ENCODE measurements at regions of chr11 and their contacts with region 1.

Region 1: GRCh38 chr11:16935518-16936302 is 78.5 kb downstream of the PLEKHA7 start:
- DNase-seq: peak in 2 of 9 donors; percentile 3 to 6
- ATAC-seq: no peak
- H3K4me3 ChIP-seq: no peak overlapping the region
- H3K4me3 Mint-ChIP-seq: no peak overlapping the region
- H3K27ac ChIP-seq: no peak overlapping the region
- H3K27ac Mint-ChIP-seq: no peak overlapping the region
- H3K4me1 ChIP-seq: no peaks in the 10 kb centered on the region
- H3K4me1 Mint-ChIP-seq: no peaks in the 10 kb centered on the region
- H3K27me3 ChIP-seq: no peaks in the 10 kb centered on the region
- H3K27me3 Mint-ChIP-seq: peaks cover 0 to 20% (median 5%) of the 10 kb centered on the region in 5 donors

Region 2: DNA sequence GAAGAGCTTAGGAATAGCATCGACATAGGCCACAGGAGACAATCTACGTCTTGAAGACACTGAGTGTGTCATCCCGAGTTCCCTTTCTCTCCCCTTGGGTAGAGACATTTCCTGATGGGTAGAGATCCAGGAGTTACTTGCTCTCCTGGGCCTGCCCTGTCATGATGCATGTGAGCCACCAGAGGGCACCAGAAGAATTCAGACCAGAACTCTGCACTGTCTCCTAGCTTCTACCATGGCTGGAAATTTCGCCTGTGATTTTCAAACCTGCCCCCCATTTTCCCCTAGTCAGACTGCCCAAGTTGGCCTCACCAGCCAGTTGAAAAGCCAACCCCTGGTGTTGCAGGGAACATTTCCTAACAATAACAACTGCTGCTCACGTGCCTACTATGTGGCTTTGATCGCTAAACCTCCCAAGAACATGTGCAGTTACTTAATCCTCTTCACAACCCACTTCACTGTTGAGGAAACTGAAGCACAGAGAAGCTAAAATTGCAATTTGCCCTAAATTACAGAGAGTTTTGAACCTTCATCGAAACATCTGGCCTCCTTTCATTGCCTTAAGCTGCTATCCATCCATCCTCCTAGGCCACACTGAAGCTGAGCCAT is 150.1 kb before region 1 on chr11:
- CTCF ChIA-PET with region 1: no interaction called
- POLR2A ChIA-PET with region 1: no interaction called
- intact Hi-C with region 1: loop called in 1 of 2 experiments (anchors 10 kb)
- DNase-seq: peak in 6 of 9 donors; percentile 24 to 50 (median 40)
- ATAC-seq: peak; percentile 83
- H3K4me3 ChIP-seq: no peak overlapping the region
- H3K4me3 Mint-ChIP-seq: no peak overlapping the region
- H3K27ac ChIP-seq: no peak overlapping the region
- H3K27ac Mint-ChIP-seq: no peak overlapping the region
- H3K4me1 ChIP-seq: no peaks in the 10 kb centered on the region
- H3K4me1 Mint-ChIP-seq: no peaks in the 10 kb centered on the region
- H3K27me3 ChIP-seq: no peaks in the 10 kb centered on the region
- H3K27me3 Mint-ChIP-seq: no peaks in the 10 kb centered on the region

Region 3: GRCh38 chr11:16881074-16881709 is 54.5 kb before region 1 on chr11:
- CTCF ChIA-PET with region 1: no interaction called
- POLR2A ChIA-PET with region 1: no interaction called
- intact Hi-C with region 1: no loop called
- DNase-seq: no peak
- ATAC-seq: no peak
- H3K4me3 ChIP-seq: no peak overlapping the region
- H3K4me3 Mint-ChIP-seq: no peak overlapping the region
- H3K27ac ChIP-seq: no peak overlapping the region
- H3K27ac Mint-ChIP-seq: no peak overlapping the region
- H3K4me1 ChIP-seq: no peaks in the 10 kb centered on the region
- H3K4me1 Mint-ChIP-seq: peaks cover 0 to 3% (median 0%) of the 10 kb centered on the region in 7 donors
- H3K27me3 ChIP-seq: no peaks in the 10 kb centered on the region
- H3K27me3 Mint-ChIP-seq: peaks cover 0 to 17% (median 6%) of the 10 kb centered on the region in 5 donors

Region 4: GRCh38 chr11:17014838-17015626 is 79.3 kb after region 1 on chr11:
- CTCF ChIA-PET with region 1: no interaction called
- POLR2A ChIA-PET with region 1: no interaction called
- intact Hi-C with region 1: loop called in 1 of 2 experiments (anchors 10 kb)
- DNase-seq: peak in 6 of 9 donors; percentile 1 to 28 (median 15)
- ATAC-seq: peak; percentile 58
- H3K4me3 ChIP-seq: peak overlapping the region; percentile 52
- H3K4me3 Mint-ChIP-seq: peak overlapping the region in 9 of 10 donors; percentile 79 to 99 (median 93)
- H3K27ac ChIP-seq: no peak overlapping the region
- H3K27ac Mint-ChIP-seq: peak overlapping the region in 4 of 9 donors; percentile 45 to 81 (median 60)
- H3K4me1 ChIP-seq: no peaks in the 10 kb centered on the region
- H3K4me1 Mint-ChIP-seq: peaks cover 3 to 9% (median 8%) of the 10 kb centered on the region in 7 donors
- H3K27me3 ChIP-seq: peaks cover 0 to 7% of the 10 kb centered on the region in 2 donors
- H3K27me3 Mint-ChIP-seq: peaks cover 14 to 40% (median 18%) of the 10 kb centered on the region in 5 donors

Region 5: GRCh38 chr11:17504330-17505107 is 568.8 kb after region 1 on chr11:
- CTCF ChIA-PET with region 1: no interaction called
- POLR2A ChIA-PET with region 1: no interaction called
- intact Hi-C with region 1: loop called in 1 of 2 experiments (anchors 10 kb)
- DNase-seq: peak; percentile 63 to 83 (median 77)
- ATAC-seq: peak; percentile 79
- H3K4me3 ChIP-seq: no peak overlapping the region
- H3K4me3 Mint-ChIP-seq: no peak overlapping the region
- H3K27ac ChIP-seq: no peak overlapping the region
- H3K27ac Mint-ChIP-seq: no peak overlapping the region
- H3K4me1 ChIP-seq: no peaks in the 10 kb centered on the region
- H3K4me1 Mint-ChIP-seq: no peaks in the 10 kb centered on the region
- H3K27me3 ChIP-seq: no peaks in the 10 kb centered on the region
- H3K27me3 Mint-ChIP-seq: peaks cover 0 to 12% (median 5%) of the 10 kb centered on the region in 5 donors